ENCODE measurements at regions of chr11 and their contacts with region 1.

Region 1: DNA sequence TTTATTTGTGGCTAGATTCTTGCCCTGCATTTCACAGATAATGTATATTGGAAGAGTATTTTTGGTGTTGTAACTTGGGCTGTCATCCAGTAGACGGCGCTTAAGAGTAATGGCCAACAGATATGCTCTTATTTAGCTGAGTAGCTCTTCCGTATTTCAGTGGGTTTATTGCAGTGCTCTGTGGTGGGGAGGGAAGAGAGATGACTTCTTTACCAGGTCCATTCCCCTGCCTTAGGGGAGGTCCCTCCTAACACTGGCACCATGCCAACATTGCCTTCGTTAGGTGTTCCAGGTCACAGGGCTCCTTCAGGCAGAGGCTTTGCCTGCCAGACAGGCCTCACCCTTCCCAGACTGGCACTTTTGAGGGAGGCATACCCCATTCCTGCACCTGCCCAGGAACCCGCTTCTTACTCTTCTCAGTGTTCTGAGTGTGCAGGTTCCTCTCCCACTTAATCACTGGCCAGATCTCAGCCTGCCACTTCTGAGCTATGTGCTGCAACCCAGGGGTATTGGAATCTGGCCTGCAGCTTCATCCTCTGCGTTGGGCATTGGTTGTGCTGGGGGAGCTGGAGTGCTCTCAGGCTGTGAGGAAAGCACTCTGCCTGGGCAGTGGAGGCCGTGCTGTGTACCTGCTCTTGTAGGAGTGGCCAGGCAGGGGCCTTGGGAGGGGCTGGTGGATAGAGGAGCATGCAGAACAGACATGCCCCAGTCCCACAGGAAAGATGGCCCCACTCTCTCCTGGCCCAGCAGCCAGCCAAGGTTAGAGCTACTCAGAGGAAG is 29.4 kb upstream of the SLN start:
- DNase-seq: no peak
- ATAC-seq: peak; percentile 86
- H3K4me3 Mint-ChIP-seq: no peak overlapping the region
- H3K27ac Mint-ChIP-seq: no peak overlapping the region
- H3K4me1 Mint-ChIP-seq: peaks cover 16% of the 10 kb centered on the region
- H3K27me3 Mint-ChIP-seq: peaks cover 51% of the 10 kb centered on the region
- CTCF ChIP-seq: peak; percentile 46

Region 2: DNA sequence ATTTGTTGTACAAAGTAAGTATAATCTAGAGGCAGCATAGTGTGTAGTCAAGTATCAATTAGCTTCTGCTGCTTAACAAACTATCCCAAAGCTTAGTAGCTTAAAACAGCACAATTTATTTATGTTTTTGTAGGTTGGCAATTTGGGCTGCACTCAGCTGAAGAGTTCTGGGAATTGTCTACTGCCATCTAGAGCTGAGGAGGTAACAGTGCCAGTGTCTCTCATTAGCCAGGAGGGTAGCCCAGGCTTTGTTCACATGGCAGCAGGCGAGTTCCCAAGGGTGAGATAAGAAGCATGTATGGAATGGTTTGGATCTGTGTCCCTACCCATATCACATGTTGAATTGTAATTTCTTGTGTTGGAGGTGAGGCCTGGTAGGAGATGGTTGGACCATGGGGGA is 16.4 kb after region 1 on chr11:
- CTCF ChIA-PET with region 1: interaction called, 17 read pairs
- POLR2A ChIA-PET with region 1: no interaction called
- DNase-seq: no peak
- ATAC-seq: peak; percentile 92
- H3K4me3 Mint-ChIP-seq: no peak overlapping the region
- H3K27ac Mint-ChIP-seq: no peak overlapping the region
- H3K4me1 Mint-ChIP-seq: no peaks in the 10 kb centered on the region
- H3K27me3 Mint-ChIP-seq: no peaks in the 10 kb centered on the region; the same call in 1 of the 2 replicates
- CTCF ChIP-seq: no peak

Region 3: GRCh38 chr11:107770551-107770951 is 29.3 kb after region 1 on chr11:
- CTCF ChIA-PET with region 1: interaction called, 28 read pairs
- POLR2A ChIA-PET with region 1: no interaction called
- DNase-seq: no peak
- ATAC-seq: no peak
- H3K4me3 Mint-ChIP-seq: no peak overlapping the region
- H3K27ac Mint-ChIP-seq: no peak overlapping the region
- H3K4me1 Mint-ChIP-seq: no peaks in the 10 kb centered on the region
- H3K27me3 Mint-ChIP-seq: no peaks in the 10 kb centered on the region; the same call in 1 of the 2 replicates
- CTCF ChIP-seq: no peak